Activated CD4-positive, alpha-beta memory T cell treated with anti-CD3 and anti-CD28 coated beads, Interleukin-2, amount 10 ng/mL, durations not matched to agents 7 days and 5 days (primary cell): ENCODE measurements at regions of chr2 and their contacts with region 1.

Region 1: GRCh38 chr2:68709421-68709911 is 25.1 kb upstream of the ARHGAP25 start:
- DNase-seq: no peak
- H3K4me3 Mint-ChIP-seq: no peak overlapping the region
- H3K27ac Mint-ChIP-seq: no peak overlapping the region
- H3K4me1 Mint-ChIP-seq: peaks cover 36% of the 10 kb centered on the region
- H3K27me3 Mint-ChIP-seq: peaks cover 8% of the 10 kb centered on the region

Region 2: GRCh38 chr2:68594674-68595492 is 114.6 kb before region 1 on chr2:
- CTCF ChIA-PET with region 1: interaction called, 12 read pairs
- POLR2A ChIA-PET with region 1: no interaction called
- DNase-seq: peak; percentile 63
- H3K4me3 Mint-ChIP-seq: peak overlapping the region; percentile 34
- H3K27ac Mint-ChIP-seq: no peak overlapping the region
- H3K4me1 Mint-ChIP-seq: peaks cover 11% of the 10 kb centered on the region
- H3K27me3 Mint-ChIP-seq: peaks cover 12% of the 10 kb centered on the region

Region 3: GRCh38 chr2:68734688-68735525 is 25.4 kb after region 1 on chr2 and contains the start of gene ARHGAP25:
- CTCF ChIA-PET with region 1: interaction called, 35 read pairs
- POLR2A ChIA-PET with region 1: interaction called, 491 read pairs
- DNase-seq: peak; percentile 68
- H3K4me3 Mint-ChIP-seq: no peak within 1 kb of the TSS
- H3K27ac Mint-ChIP-seq: no peak within 1 kb of the TSS
- H3K4me1 Mint-ChIP-seq: peaks cover 34% of the 10 kb centered on the region
- H3K27me3 Mint-ChIP-seq: no peaks in the 10 kb centered on the region
- total RNA-seq, gene ARHGAP25: 128 to 132 TPM

Region 4: DNA sequence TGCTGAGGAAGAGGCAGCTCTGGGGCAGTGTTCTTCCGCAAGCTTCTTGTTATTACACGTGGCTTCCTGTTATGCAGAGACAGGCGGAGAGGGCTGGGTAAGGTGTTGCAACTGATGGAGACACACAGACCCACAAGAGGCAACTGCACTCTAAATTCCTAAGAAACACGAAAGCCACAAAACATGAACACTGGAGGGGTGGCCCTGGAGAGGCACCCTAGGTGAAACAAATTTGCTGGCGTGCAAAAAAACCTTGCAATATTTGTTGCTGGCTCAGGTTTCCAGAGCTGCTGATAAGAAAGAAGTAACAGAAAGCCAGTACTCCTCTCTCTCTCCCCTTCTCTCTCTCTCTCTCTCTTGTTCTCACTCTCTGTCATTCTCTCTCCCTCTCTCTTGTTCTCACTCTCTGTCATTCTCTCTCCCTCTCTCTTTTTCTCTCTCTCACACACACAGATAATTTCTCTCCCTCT is 56.9 kb after region 1 on chr2:
- CTCF ChIA-PET with region 1: interaction called, 13 read pairs
- POLR2A ChIA-PET with region 1: interaction called, 4 read pairs
- DNase-seq: peak; percentile 84
- H3K4me3 Mint-ChIP-seq: peak overlapping the region; percentile 70
- H3K27ac Mint-ChIP-seq: peak overlapping the region; percentile 97
- H3K4me1 Mint-ChIP-seq: peaks cover 97% of the 10 kb centered on the region
- H3K27me3 Mint-ChIP-seq: no peaks in the 10 kb centered on the region

Region 5: DNA sequence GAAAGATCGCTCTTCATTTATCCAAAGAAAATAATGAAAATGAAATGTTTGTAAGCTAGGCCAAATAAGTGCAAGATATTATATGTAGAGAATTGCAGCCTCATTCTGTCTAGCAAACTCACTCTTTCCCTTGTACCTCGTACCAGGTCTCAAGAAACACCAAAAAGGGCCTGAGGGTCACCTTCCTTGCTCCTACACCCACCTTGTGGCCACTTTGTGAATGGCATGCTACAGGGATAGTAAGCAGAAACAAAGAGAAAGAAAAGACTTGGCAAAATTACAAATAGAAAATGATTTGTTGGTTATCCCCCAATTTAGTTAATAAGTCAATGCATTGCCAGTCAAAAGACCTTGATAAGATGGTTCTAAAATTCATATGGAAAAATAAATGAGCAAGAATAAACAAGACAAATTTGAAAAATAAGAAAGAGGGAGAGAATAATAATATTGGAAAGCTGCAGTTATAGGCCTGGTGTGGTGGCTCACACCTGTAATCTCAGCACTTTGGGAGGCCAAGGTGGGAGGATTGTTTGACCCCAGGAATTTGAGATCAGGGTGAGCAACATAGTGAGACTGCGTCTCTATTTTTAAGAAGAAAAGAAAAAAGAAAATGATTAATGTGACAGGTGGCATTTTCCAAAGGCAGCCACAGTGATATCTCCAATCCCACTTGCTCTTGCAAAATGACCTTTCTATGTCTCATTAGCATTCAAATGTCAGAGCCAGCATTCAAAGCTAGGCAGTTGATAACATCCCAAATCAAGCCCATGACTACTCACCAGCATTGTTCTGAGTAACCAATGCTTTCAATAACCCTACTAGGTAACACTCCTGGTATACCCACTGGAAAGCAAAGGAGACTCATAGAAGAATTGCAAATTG is 200.6 kb after region 1 on chr2:
- CTCF ChIA-PET with region 1: interaction called, 32 read pairs
- POLR2A ChIA-PET with region 1: interaction called, 5 read pairs
- DNase-seq: peak; percentile 80
- H3K4me3 Mint-ChIP-seq: no peak overlapping the region
- H3K27ac Mint-ChIP-seq: peak overlapping the region; percentile 69
- H3K4me1 Mint-ChIP-seq: peaks cover 43% of the 10 kb centered on the region
- H3K27me3 Mint-ChIP-seq: no peaks in the 10 kb centered on the region